Mucosa of descending colon (tissue), 3 donors: ENCODE measurements at regions of chr1 and their contacts with region 1.

Region 1: DNA sequence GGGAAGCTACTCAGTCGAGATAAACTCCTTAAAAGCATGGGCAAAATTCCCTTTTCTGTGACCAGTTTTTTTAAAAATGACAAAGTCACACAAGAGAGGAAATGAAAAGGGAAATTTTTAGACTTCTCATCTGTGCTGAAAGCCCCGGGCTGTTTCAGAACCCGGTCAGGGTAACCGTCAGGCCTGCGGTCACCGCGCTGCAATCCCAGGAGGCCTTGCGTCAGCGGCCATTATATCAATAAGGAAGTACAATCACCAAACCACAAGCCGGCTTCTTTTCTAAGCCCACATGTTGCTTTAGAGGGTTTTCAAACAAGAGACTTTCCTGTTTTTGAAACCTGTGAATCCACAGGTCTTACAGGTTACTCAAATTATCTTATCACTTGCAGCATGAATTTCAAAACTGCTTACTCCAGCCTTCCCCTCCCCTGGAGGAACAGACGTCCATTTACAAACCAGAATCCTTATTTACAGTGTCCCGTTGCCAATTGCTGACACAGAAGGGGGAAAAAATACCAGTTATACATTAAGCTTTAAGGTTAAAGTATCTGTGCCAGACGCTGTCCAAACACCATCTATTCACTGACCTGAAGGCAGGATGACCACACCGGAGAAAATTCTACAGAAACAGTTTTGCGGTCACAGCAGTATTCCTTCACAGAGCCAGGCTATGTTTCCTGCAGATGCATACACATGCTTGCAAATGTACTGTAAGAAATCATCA is 165.3 kb downstream of the TOMM20 start:
- DNase-seq: peak; percentile 85 to 95 (median 91)
- ATAC-seq: peak; percentile 38
- H3K4me3 ChIP-seq: no peak overlapping the region
- H3K4me1 ChIP-seq: peaks cover 67% of the 10 kb centered on the region
- CTCF ChIP-seq: peak; percentile 6

Region 2: DNA sequence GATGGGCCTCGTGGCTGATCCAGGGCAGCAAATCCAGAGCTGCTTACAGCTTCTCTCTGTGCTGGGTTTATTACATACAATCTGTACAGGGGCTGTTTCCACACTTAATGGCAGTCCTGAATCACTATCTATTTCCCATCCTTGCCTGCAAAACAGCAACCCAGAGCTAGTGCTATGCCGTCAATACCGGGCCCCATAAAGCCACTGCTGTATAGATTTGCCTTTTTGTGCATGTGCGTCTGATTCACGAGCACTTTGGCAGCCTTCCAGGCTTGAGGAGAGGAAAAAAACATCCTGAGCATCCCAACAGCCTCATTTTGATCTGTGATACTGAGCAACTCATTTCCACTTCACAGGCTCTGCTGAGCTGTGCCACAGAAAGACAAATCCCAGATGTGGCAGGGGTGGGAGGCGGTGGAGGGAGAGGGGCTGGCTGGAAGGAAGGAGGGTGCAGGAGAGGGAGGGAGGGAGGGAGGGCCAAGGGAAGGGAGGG is 419.2 kb before region 1 on chr1:
- intact Hi-C with region 1: no loop called
- DNase-seq: peak in 2 of 3 donors; percentile 58 to 78
- ATAC-seq: peak; percentile 61
- H3K4me3 ChIP-seq: no peak overlapping the region
- H3K4me1 ChIP-seq: peaks cover 22% of the 10 kb centered on the region
- CTCF ChIP-seq: no peak

Region 3: DNA sequence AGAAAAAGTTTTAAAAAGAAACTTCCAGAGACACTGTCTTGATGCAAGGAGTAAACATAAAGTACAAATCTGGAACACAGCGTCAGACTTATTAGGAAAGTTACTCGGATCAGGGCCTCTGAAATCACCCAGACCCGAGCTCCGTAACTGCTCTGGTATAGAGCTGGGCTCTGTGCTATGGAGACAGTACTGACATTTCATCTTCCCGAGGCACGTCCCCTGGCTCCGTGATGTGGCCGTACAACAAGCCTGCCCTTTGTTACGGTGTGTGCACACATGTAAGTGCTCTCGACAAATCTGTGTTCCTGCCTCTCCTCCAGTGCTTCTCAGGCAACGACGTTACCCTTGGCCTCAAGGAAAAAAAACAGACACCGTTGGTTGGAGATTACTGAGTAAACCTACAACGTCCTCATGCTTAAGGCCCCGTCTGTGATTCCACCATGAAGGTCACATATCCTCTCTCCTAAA is 246.4 kb before region 1 on chr1:
- intact Hi-C with region 1: loop called in 1 of 2 experiments (anchors 5 kb)
- DNase-seq: peak in 2 of 3 donors; percentile 54 to 66
- ATAC-seq: peak; percentile 32
- H3K4me3 ChIP-seq: no peak overlapping the region
- H3K4me1 ChIP-seq: peaks cover 63% of the 10 kb centered on the region
- CTCF ChIP-seq: no peak

Region 4: DNA sequence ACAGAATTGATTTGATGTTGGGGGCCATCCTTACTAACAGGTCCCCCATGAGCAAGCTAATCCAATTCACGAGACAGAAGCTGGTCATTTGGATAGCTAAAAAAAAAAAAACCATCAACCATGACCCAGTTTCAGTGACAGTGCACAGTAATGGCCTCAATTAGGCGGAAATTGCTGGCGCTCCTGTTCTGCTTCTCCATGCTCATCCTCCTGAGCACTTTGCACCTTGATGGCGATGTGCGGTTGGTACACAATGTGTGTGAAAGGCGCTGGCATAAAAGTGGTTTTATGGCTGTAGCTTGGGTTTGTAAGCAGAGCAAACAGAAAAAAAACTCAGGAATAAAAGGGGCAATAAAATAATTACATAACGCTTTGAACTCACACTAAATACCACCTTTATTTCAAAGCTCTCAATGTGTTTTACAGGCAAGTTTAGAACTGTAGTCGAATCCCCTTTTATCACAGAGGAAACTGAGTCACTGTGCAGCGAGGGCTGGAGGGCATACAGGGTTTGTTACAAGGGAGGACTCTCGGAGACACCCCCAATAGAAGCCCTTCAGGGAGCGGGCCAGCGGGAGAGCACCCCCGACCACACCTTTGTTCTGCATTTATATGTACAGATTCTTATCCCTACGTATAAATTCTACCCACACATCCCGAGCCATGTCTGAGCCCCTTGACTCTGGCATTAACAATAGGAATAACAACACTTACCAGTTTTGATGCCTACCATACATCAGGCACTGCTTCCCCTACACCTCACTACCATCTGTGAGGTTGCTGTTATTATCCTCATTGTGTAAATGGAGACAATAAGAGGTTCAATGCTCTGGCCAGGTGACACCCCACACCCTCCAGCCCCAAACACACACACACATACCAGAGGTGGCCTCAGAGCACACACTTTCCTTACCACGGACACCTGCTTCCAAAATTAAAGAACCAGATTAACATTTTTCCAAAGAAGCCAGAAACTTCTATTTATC is 139.9 kb before region 1 on chr1:
- intact Hi-C with region 1: loop called in 1 of 2 experiments (anchors 10 kb)
- DNase-seq: peak; percentile 76 to 91 (median 83)
- ATAC-seq: peak; percentile 87
- H3K4me3 ChIP-seq: no peak overlapping the region
- H3K4me1 ChIP-seq: peaks cover 41% of the 10 kb centered on the region
- CTCF ChIP-seq: no peak

Region 5: GRCh38 chr1:236072001-236072400 is 1108.7 kb after region 1 on chr1:
- intact Hi-C with region 1: no loop called
- DNase-seq: no peak
- ATAC-seq: no peak
- H3K4me3 ChIP-seq: no peak overlapping the region
- H3K4me1 ChIP-seq: no peaks in the 10 kb centered on the region
- CTCF ChIP-seq: no peak